HEK293 (cell line): ENCODE measurements at regions of chr21 and their contacts with region 1.

Region 1: GRCh38 chr21:34603002-34603709 is 11.8 kb downstream of the RCAN1 start:
- H3K4me3 ChIP-seq: no peak overlapping the region
- H3K27ac ChIP-seq: no peak overlapping the region
- H3K4me1 ChIP-seq: peaks cover 5% of the 10 kb centered on the region
- CTCF ChIP-seq: no peak

Region 2: GRCh38 chr21:34180407-34180806 is 422.7 kb before region 1 on chr21:
- CTCF ChIA-PET with region 1: no interaction called
- POLR2A ChIA-PET with region 1: no interaction called
- H3K4me3 ChIP-seq: no peak overlapping the region
- H3K27ac ChIP-seq: no peak overlapping the region
- H3K4me1 ChIP-seq: no peaks in the 10 kb centered on the region
- CTCF ChIP-seq: no peak

Region 3: DNA sequence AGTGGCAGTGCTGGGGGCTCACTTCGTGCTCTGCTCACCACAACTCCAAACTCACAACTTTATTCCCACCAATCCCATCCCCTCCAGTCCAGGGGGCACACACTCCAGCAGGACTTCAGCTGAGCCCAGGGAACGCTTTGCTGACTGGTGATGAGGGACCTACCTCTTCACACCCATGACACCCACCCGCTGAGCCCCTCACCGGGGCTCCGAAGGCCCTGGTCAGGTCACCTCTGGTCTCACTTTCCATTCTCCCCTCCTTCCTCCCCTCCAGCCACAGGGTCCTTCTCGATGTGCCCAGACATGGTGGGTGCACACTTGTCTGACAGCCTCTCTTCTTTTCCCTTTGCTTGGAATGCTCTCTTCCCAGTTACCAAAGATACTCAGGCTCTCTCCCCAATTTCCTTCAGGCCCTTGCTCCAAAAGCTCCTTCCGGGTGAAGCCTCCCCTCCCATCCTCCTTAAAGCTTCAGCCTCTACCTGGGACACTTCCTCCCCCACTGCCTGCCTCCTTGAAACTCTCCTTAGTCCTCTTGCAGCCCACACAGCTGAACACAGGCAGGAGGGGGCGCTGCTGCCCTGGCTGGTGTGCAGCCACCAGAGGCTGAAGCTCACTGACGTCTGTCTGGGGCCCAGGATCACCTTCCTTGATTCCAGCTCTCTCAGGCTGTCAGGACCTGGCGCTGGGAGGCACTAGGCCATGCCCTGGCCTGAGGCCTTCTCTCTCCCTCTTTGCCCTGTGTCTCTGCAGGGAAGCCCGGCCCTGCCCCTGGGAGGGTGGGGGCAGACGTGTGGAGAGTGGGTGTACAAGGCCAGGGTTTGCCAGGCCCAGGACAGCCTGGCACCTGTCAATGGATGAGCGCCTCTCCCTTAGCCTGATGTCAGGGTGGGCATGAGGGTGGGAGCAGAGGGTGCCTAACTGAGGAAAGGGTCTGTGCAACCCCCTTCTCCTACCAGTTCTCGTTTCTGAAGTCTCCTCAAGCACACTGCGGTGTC is 92.7 kb before region 1 on chr21:
- CTCF ChIA-PET with region 1: interaction called, 159 read pairs
- POLR2A ChIA-PET with region 1: interaction called, 3 read pairs
- H3K4me3 ChIP-seq: no peak overlapping the region
- H3K27ac ChIP-seq: no peak overlapping the region
- H3K4me1 ChIP-seq: no peaks in the 10 kb centered on the region
- CTCF ChIP-seq: peak; percentile 59; the same call in 1 of the 2 replicates

Region 4: DNA sequence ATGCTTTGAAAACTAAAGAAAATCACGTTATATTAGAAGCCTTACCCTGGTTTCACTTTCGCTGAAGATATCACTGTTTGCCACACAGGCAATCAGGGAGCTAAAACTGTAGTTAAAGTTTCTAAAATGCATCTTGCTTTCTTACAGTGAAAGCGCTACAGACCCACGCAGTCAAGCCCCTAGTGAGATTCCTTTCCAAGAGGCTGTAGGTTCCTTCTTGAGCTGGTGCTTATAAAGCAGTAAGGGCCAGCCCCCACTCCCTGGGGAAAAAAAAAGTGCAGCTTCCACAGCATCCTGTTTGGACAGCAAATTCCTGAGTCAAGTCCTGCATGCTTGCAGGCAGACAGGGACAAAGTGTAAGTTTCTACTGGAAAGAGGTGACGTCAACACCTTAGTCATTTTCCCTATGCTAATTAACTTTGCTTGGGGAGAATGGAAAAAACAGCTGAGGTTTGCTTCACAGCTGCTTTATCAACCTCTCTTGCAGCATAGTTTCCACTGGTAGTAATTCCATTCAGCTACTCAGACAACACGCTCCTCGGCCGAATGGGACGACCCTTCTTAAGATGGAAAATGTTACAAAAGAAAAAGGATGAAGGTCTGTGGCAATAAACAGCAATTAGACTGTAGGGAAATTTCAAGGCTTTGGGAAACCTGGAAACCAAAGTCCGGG is 76.4 kb before region 1 on chr21:
- CTCF ChIA-PET with region 1: interaction called, 16 read pairs
- POLR2A ChIA-PET with region 1: no interaction called
- H3K4me3 ChIP-seq: peak overlapping the region; percentile 18
- H3K27ac ChIP-seq: peak overlapping the region; percentile 32; the same call in 1 of the 2 replicates
- H3K4me1 ChIP-seq: peaks cover 8% of the 10 kb centered on the region
- CTCF ChIP-seq: no peak

Region 5: DNA sequence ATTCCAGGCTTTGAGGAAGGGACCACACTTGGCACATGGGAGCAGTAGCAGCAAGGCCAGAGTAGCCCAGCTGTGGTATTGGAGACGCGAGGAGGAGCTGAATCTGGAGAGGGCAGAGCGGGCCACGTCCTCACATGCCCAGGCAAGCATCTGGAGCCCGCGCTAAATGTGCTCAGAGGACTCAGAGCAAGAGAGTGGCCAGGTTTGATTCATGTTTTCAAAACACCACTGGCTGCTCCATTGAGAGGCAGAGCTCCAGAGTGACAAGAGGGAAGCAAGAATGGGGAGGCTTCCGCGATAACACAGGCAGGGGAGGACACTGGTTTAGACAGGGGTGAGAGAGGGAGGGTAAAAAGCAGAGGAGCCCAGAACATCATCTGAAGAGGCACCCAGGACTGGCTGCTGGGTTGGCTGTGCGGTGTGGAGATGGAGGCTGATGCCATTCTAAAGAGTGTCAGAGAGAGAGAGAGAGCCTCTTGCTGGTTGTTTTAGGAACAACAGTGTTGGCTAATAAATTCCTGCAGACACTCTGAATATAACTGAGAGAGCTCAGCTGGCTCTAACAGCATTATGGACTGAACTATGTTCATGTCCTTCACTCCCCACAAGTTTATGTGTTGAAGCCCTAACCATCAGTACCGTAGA is 20.5 kb before region 1 on chr21:
- CTCF ChIA-PET with region 1: interaction called, 20 read pairs
- POLR2A ChIA-PET with region 1: interaction called, 5 read pairs
- H3K4me3 ChIP-seq: no peak overlapping the region
- H3K27ac ChIP-seq: no peak overlapping the region
- H3K4me1 ChIP-seq: no peaks in the 10 kb centered on the region
- CTCF ChIP-seq: no peak

Region 6: DNA sequence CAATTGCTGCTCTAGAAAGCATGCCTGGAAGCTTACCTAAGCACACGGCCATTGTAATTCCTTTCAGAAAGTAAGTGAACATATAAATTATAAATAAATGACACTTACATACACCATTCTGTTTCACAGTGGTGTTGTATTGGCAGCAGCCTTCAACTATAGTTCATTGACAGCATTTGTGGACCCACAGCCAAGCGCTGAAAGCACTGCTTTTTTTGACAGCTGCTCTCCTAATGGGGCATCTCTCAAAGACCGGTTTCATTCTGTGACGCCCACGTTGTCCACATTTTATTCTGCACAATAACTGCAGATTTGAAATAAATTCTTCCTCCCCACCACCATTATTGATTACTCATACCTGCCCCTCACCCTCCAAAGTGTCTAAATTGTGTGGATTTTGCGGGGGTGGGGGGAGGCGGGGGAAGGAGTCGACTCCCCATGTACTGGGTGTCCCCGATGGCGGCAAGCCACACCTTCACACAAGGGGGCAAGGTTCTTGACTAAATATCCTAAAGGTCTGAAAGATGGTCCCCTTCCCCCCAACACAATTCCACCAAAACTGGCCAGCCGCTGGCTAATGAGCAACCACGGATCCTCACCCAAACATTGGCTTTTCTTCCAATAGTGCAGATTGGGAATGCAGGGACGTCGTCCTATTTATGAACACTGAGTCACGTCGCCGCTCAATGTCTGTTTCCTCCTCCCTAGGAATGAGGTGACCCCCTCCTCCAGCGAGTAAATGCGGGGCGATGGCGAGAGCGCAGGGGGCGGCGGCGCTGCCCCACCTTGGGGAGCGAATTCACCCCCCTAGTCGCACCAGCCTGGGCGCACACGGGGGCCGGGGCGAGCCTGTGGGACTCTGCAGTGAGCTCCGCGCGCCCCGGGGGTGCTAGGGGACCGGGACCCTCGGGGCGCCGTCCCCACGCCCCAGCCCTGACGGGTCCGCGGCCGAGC is 10.8 kb after region 1 on chr21:
- CTCF ChIA-PET with region 1: interaction called, 40 read pairs
- POLR2A ChIA-PET with region 1: no interaction called
- H3K4me3 ChIP-seq: peak overlapping the region; percentile 78
- H3K27ac ChIP-seq: peak overlapping the region; percentile 72; the same call in 1 of the 2 replicates
- H3K4me1 ChIP-seq: peaks cover 2% of the 10 kb centered on the region
- CTCF ChIP-seq: no peak